ENCODE measurements at regions of chr13 and their contacts with region 1.

Region 1: DNA sequence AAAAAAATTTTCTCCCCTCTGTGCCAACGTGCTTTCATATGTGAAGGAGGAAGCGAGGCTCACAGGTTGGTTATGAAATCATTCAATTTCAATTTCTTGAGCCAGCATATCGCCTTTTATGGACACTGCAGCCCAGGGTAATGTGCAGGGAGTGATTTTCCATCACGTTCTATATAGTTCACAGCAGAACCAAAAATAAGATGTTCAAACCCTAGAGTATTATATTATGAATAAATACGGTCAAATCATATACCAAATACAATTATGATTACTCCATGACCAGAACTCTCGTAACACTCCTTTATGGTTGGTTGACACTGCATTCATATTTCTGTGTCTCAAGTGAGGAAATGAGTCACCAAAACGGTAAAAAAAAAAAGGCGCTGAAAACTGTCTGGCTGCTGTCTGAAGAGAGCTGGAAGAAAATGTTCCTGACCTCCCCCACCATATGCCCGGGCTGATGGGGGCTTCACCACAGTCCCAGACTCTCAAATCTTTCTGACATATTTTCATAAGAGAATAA is 75.8 kb upstream of the UBAC2 start:
- DNase-seq: peak in 1 of 2 donors; percentile 51
- ATAC-seq: peak; percentile 81 to 91 (median 83)
- H3K4me3 ChIP-seq: no peak overlapping the region
- H3K4me3 Mint-ChIP-seq: no peak overlapping the region
- H3K27ac ChIP-seq: no peak overlapping the region
- H3K27ac Mint-ChIP-seq: peak overlapping the region; percentile 17 to 75
- H3K4me1 ChIP-seq: peaks cover 6% of the 10 kb centered on the region
- H3K4me1 Mint-ChIP-seq: peaks cover 15 to 17% of the 10 kb centered on the region in 2 donors
- H3K27me3 ChIP-seq: peaks cover 5% of the 10 kb centered on the region
- H3K27me3 Mint-ChIP-seq: peaks cover 43 to 52% of the 10 kb centered on the region in 2 donors
- CTCF ChIP-seq: no peak

Region 2: GRCh38 chr13:98741741-98742435 is 383.0 kb before region 1 on chr13:
- intact Hi-C with region 1: no loop called
- DNase-seq: no peak
- ATAC-seq: no peak
- H3K4me3 ChIP-seq: no peak overlapping the region
- H3K4me3 Mint-ChIP-seq: no peak overlapping the region
- H3K27ac ChIP-seq: no peak overlapping the region
- H3K27ac Mint-ChIP-seq: no peak overlapping the region
- H3K4me1 ChIP-seq: no peaks in the 10 kb centered on the region
- H3K4me1 Mint-ChIP-seq: no peaks in the 10 kb centered on the region
- H3K27me3 ChIP-seq: no peaks in the 10 kb centered on the region
- H3K27me3 Mint-ChIP-seq: peaks cover 0 to 6% of the 10 kb centered on the region in 2 donors
- CTCF ChIP-seq: no peak

Region 3: GRCh38 chr13:98782654-98783053 is 342.2 kb before region 1 on chr13:
- intact Hi-C with region 1: no loop called
- DNase-seq: no peak
- ATAC-seq: no peak
- H3K4me3 ChIP-seq: no peak overlapping the region
- H3K4me3 Mint-ChIP-seq: no peak overlapping the region
- H3K27ac ChIP-seq: no peak overlapping the region
- H3K27ac Mint-ChIP-seq: no peak overlapping the region
- H3K4me1 ChIP-seq: no peaks in the 10 kb centered on the region
- H3K4me1 Mint-ChIP-seq: no peaks in the 10 kb centered on the region
- H3K27me3 ChIP-seq: no peaks in the 10 kb centered on the region
- H3K27me3 Mint-ChIP-seq: peaks cover 19 to 22% of the 10 kb centered on the region in 2 donors
- CTCF ChIP-seq: no peak

Region 4: GRCh38 chr13:99053636-99054233 is 71.1 kb before region 1 on chr13:
- intact Hi-C with region 1: loop called (anchors 5 kb)
- DNase-seq: peak in 1 of 2 donors; percentile 32
- ATAC-seq: no peak
- H3K4me3 ChIP-seq: no peak overlapping the region
- H3K4me3 Mint-ChIP-seq: no peak overlapping the region
- H3K27ac ChIP-seq: no peak overlapping the region
- H3K27ac Mint-ChIP-seq: no peak overlapping the region
- H3K4me1 ChIP-seq: peaks cover 56% of the 10 kb centered on the region
- H3K4me1 Mint-ChIP-seq: peaks cover 46 to 54% of the 10 kb centered on the region in 2 donors
- H3K27me3 ChIP-seq: no peaks in the 10 kb centered on the region
- H3K27me3 Mint-ChIP-seq: peaks cover 21 to 26% of the 10 kb centered on the region in 2 donors
- CTCF ChIP-seq: no peak

Region 5: GRCh38 chr13:99165753-99166587 is 41.1 kb after region 1 on chr13:
- intact Hi-C with region 1: no loop called
- DNase-seq: no peak
- ATAC-seq: no peak
- H3K4me3 ChIP-seq: no peak overlapping the region
- H3K4me3 Mint-ChIP-seq: no peak overlapping the region
- H3K27ac ChIP-seq: no peak overlapping the region
- H3K27ac Mint-ChIP-seq: no peak overlapping the region
- H3K4me1 ChIP-seq: no peaks in the 10 kb centered on the region
- H3K4me1 Mint-ChIP-seq: no peaks in the 10 kb centered on the region
- H3K27me3 ChIP-seq: no peaks in the 10 kb centered on the region
- H3K27me3 Mint-ChIP-seq: peaks cover 21 to 24% of the 10 kb centered on the region in 2 donors
- CTCF ChIP-seq: no peak

Measured in natural killer cell (primary cell).